H1 (cell line): ENCODE measurements at regions of chr16 and their contacts with region 1.

Region 1: GRCh38 chr16:85454171-85454872 is 158.8 kb upstream of the GSE1 start:
- DNase-seq: no peak
- H3K4me3 ChIP-seq: no peak overlapping the region
- H3K27ac ChIP-seq: no peak overlapping the region
- H3K4me1 ChIP-seq: peaks cover 0 to 13% (median 7%) of the 10 kb centered on the region in 4 experiments; a peak in 5 of 7 replicates
- H3K27me3 ChIP-seq: peaks cover 0 to 4% (median 3%) of the 10 kb centered on the region in 4 experiments; a peak in 5 of 7 replicates
- CTCF ChIP-seq: peak; percentile 26 to 44 (median 33)
- EP300 ChIP-seq: no peak
- POLR2A ChIP-seq: no peak
- RAD21 ChIP-seq: peak; percentile 27 to 45; a peak in 3 of 4 replicates

Region 2: GRCh38 chr16:85305996-85306792 is 148.1 kb before region 1 on chr16:
- CTCF ChIA-PET with region 1: no interaction called
- POLR2A ChIA-PET with region 1: no interaction called
- DNase-seq: no peak
- H3K4me3 ChIP-seq: no peak overlapping the region
- H3K27ac ChIP-seq: no peak overlapping the region
- H3K4me1 ChIP-seq: peaks cover 3 to 27% (median 23%) of the 10 kb centered on the region in 4 experiments
- H3K27me3 ChIP-seq: 0 out of 7 replicates have a peak, but pooled peaks cover 0 to 4% (median 0%) of the 10 kb centered on the region in 4 experiments
- CTCF ChIP-seq: no peak
- EP300 ChIP-seq: no peak
- POLR2A ChIP-seq: no peak
- RAD21 ChIP-seq: no peak

Region 3: DNA sequence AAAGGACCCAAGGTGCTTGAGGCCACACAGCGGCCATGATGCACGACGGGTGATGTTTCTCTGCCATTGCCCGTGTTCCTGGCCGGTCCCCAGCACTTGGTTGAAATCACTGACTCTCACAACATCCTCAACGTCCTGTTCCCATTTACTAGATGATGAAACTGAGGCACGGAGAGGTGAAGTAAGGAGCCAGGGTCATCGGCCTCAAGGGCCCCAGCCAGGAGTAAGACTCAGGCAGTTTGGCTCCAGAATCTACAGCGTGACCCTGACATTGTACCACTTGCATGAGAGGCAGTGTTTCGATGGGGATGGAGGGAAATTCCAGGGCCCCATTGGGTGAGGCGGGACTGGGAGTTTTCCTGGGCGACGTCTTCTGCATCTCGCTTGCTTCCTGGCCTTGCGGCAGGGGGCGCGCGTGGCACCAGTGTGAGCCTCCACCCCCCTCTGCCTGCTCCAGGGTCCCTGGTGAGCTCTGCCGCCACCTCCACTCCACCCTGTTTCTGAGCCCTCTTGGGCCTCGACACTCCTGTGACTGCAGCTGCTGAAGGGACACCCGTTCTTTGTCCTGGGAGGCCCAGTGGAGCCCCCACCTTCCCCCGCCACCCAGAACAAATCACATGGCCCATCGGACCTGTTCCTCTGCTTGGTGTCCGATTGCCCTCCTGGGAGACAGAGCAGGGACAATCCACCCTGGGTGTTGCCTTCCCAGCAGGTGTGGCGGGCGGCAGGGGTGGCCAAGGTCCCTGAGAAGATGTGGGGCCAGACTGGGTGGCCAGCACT is 25.8 kb after region 1 on chr16:
- CTCF ChIA-PET with region 1: interaction called, 11 read pairs
- POLR2A ChIA-PET with region 1: no interaction called
- DNase-seq: peak in 1 of 2 experiments; percentile 73
- H3K4me3 ChIP-seq: no peak overlapping the region
- H3K27ac ChIP-seq: no peak overlapping the region
- H3K4me1 ChIP-seq: peaks cover 0 to 6% (median 1%) of the 10 kb centered on the region in 4 experiments; a peak in 4 of 7 replicates
- H3K27me3 ChIP-seq: no peaks in the 10 kb centered on the region
- CTCF ChIP-seq: peak; percentile 27 to 59 (median 37)
- EP300 ChIP-seq: no peak
- POLR2A ChIP-seq: no peak
- RAD21 ChIP-seq: peak; percentile 18 to 40; a peak in 2 of 4 replicates